Vagina (tissue), 2 donors: ENCODE measurements at regions of chr6 and their contacts with region 1.

Region 1: GRCh38 chr6:35731736-35732532 is 4.9 kb upstream of the ARMC12 start:
- DNase-seq: peak in 1 of 2 donors; percentile 99
- H3K4me3 ChIP-seq: peak overlapping the region; percentile 58 to 81
- H3K27ac ChIP-seq: peak overlapping the region; percentile 99
- H3K4me1 ChIP-seq: peaks cover 86% of the 10 kb centered on the region
- H3K27me3 ChIP-seq: no peaks in the 10 kb centered on the region
- CTCF ChIP-seq: peak in 1 of 3 experiments; percentile 21
- POLR2A ChIP-seq: peak in 1 of 2 donors; percentile 38

Region 2: GRCh38 chr6:35522660-35523658 is 209.0 kb before region 1 on chr6:
- intact Hi-C with region 1: loop called (anchors 2 kb)
- DNase-seq: no peak
- H3K4me3 ChIP-seq: peak overlapping the region in 1 of 2 donors; percentile 43
- H3K27ac ChIP-seq: no peak overlapping the region
- H3K4me1 ChIP-seq: no peaks in the 10 kb centered on the region
- H3K27me3 ChIP-seq: no peaks in the 10 kb centered on the region
- CTCF ChIP-seq: peak; percentile 93 to 98 (median 96)
- POLR2A ChIP-seq: no peak

Region 3: DNA sequence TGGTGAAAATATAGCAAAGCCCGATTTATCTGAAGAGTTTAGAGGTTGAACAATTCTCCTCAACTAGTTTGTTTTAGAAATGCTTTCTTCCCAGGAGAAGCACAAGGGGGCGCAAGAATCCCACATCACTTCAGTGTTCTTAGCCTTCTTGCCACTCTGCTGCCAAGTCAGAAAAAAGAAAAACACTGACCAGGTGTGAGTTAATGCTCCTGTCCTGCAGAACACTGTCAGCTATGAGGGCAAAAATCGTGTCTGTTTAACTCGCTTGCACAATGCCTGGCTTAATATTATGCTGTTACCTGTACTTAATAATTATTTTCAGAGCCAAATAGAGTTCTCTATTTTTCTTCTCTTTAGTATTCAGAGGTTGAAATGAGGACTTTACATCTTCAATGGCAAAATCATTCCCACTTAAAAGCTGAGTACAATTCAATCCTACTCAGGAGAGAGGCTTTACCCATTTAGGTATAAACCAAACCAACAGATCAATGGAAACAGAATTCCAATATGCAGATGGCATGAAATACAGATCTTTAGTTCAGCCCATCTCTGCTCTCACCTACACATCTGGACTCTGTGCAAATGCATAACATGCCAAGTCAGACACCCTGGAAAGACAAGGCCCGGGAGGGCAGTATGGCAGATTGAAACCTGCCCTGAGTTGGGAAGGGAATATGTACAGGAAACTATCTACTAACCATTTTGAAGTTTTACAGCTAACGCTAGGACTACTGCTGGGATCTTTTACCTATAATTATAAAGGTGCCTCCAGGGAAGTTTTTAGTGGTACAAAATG is 147.8 kb before region 1 on chr6:
- intact Hi-C with region 1: loop called (anchors 5 kb)
- DNase-seq: no peak
- H3K4me3 ChIP-seq: no peak overlapping the region
- H3K27ac ChIP-seq: peak overlapping the region; percentile 77
- H3K4me1 ChIP-seq: peaks cover 56% of the 10 kb centered on the region
- H3K27me3 ChIP-seq: no peaks in the 10 kb centered on the region
- CTCF ChIP-seq: peak; percentile 38 to 81 (median 47)
- POLR2A ChIP-seq: no peak

Region 4: DNA sequence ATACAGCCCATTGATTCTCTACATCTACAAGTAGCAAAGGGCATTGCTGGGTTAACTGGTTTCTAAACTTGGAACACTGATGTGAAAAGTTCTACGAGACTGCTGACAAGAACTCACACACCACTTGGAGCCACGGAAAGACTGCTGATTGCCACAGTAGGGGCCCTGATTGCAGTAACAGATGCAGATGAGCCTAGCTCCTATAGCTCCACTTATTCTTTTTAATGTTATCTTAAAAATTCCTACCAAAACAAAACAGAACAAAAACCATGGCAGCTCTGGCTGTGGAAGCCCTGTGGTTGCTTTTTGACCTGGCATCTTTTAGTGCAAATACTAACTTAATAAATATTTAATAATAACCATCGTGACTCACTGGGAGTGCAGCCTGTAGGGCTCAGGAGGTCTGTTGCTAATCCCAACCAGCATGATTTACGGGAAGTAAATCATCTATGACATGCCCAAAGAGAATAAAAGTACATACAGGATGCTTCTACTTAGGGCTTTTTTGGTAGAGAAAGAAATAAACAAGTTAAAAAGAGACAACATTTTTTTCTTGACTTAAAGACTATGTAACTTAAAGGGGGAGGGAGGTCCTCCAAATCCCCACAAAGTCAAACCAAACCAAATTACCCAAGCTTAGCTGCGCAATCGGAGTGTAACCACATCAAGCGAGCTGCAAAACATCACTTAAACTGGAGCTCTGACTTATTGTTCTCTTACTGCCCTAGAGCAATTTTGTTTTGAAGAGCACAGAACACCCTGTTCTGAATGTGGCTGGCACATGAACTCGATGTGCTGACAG is 130.4 kb before region 1 on chr6:
- intact Hi-C with region 1: loop called (anchors 2 kb)
- DNase-seq: peak in 1 of 2 donors; percentile 96
- H3K4me3 ChIP-seq: peak overlapping the region; percentile 9 to 17
- H3K27ac ChIP-seq: peak overlapping the region; percentile 96
- H3K4me1 ChIP-seq: peaks cover 91% of the 10 kb centered on the region
- H3K27me3 ChIP-seq: no peaks in the 10 kb centered on the region
- CTCF ChIP-seq: no peak
- POLR2A ChIP-seq: peak in 1 of 2 donors; percentile 15

Region 5: DNA sequence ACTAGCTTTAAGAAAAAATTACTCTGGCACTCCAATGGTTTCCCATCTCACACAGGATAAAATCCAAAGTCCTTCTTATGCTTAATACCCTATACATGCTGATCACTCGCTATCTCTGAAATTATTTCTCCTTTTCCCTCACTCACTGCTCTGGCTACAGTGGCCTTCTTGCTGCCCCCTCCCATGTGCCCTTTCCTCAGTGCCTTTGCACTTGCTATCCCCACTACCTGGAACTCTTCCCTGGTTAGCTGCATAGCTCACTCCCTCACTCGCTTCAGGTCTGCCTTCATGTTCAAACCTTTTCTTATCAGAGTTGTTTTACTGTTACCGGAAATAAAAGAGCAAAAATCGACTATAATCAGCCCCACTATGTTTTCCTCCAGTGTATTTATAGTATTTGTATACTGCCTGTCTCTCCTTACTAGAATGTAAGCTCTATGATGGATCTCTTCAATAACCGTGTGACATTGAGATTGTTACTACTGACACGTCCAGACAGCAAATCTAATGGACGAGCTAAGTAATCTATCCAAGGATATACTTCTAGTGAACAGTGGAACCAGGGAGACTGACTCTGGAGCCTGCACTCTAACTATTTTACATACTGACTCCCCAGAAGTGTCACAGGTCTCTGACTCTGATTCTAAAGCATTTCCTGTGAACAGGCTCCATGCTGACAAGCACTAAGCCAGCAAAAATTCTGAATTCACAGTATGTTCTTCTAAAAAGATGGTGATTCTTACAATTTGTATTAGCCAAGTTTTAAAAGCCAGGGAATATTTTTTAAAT is 68.3 kb before region 1 on chr6:
- intact Hi-C with region 1: no loop called
- DNase-seq: no peak
- H3K4me3 ChIP-seq: no peak overlapping the region
- H3K27ac ChIP-seq: peak overlapping the region; percentile 47
- H3K4me1 ChIP-seq: peaks cover 56% of the 10 kb centered on the region
- H3K27me3 ChIP-seq: no peaks in the 10 kb centered on the region
- CTCF ChIP-seq: no peak
- POLR2A ChIP-seq: no peak

Region 6: DNA sequence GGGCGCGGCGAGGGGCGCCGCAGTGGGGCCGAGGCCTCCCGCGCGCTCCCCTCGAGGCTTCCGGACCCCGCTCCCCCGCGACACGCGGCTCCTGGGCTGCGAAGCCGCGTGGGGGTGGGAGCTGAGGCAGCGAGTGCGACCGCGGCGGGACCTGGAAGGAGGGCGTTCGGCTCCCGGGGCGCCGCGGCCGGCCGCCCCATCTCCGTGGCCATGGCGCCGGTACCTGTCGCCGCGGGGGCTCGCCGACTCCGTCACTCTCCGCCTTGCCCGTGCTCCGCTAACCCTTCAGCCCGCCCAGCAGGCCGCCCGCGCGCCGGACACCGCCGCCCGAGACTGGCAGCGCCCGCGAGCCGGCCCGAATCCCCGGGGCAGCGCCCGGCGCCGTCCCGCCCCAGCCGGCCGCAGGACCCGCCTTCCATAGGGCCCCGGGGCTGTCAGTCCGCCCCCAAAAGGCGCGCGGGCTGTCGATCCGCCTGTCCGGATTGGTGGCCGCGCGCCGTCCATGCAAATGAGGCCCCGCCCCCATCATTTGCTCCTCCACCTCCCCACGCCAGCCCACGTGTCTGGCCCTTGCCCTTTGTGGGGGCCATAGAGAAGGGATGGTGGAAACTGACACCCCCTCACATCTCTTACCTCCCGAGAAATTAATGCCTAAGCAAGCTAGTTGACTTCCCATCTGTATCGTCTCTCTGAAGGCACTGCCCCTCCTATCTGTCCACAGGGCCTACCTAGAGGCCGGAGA is 43.2 kb before region 1 on chr6 and contains the start of gene FKBP5:
- intact Hi-C with region 1: loop called (anchors 1 kb)
- DNase-seq: peak in 1 of 2 donors; percentile 96
- H3K4me3 ChIP-seq: peak within 1 kb of the TSS; percentile 97 to 99
- H3K27ac ChIP-seq: peak within 1 kb of the TSS; percentile 99
- H3K4me1 ChIP-seq: peaks cover 15% of the 10 kb centered on the region
- H3K27me3 ChIP-seq: no peaks in the 10 kb centered on the region
- CTCF ChIP-seq: peak in 1 of 3 experiments; percentile 9
- POLR2A ChIP-seq: peak; percentile 98
- total RNA-seq, gene FKBP5: 246 TPM